Activated CD8-positive, alpha-beta T cell treated with anti-CD3 and anti-CD28 coated beads for 36 hours (primary cell): ENCODE measurements at regions of chr14 and their contacts with region 1.

Region 1: DNA sequence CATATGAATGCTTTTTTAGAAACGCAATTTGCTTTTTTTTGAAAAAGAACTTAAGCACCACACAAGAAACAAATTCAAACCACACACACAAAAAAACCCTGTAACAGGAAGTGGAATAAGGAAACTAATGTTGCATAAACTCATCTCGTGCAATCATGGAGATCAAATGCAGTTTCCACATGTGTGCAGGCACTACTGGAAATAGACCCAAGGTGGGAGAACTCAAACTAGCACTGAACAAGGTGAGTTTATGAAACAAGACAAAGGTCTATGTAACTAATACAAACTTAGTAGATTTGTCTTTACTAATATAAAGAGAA is 17.5 kb downstream of the NIN start:
- DNase-seq: no peak
- ATAC-seq: peak; percentile 70
- H3K4me3 Mint-ChIP-seq: peak overlapping the region; percentile 78
- H3K27ac Mint-ChIP-seq: peak overlapping the region; percentile 99
- H3K4me1 Mint-ChIP-seq: peaks cover 61% of the 10 kb centered on the region
- H3K27me3 Mint-ChIP-seq: no peaks in the 10 kb centered on the region
- CTCF ChIP-seq: no peak

Region 2: DNA sequence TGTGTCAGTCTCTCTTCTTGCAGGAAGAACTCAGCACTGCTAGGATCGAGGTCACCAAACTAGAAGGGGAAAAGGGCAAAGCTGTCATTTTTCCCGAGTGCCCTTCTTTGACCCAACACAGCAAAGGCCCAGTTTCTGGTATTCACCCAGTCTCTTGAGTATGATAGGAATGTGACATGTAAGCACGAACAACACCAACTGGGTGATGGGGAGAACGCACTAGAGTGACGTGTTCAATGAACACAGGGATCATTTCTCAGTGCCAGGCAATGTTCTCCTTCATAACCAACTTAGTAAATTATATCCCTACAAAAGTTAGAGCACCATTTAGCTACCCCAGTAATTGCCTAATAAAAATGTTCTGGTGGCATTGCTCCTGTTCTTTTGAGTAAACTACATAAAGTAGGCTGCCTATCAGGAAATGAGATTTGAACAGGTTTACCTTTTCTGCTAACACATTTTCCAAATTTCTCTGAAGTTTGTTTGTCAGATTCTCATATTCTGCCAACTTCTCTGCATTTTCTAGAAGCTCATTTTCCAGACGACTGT is 47.1 kb before region 1 on chr14:
- CTCF ChIA-PET with region 1: no interaction called
- POLR2A ChIA-PET with region 1: no interaction called
- intact Hi-C with region 1: no loop called
- DNase-seq: no peak
- ATAC-seq: no peak
- H3K4me3 Mint-ChIP-seq: no peak overlapping the region
- H3K27ac Mint-ChIP-seq: peak overlapping the region; percentile 77
- H3K4me1 Mint-ChIP-seq: peaks cover 49% of the 10 kb centered on the region
- H3K27me3 Mint-ChIP-seq: no peaks in the 10 kb centered on the region
- CTCF ChIP-seq: no peak

Region 3: GRCh38 chr14:50797250-50798047 is 16.1 kb before region 1 on chr14:
- CTCF ChIA-PET with region 1: interaction called, 4 read pairs
- POLR2A ChIA-PET with region 1: interaction called, 9 read pairs
- intact Hi-C with region 1: loop called (anchors 2 kb)
- DNase-seq: no peak
- ATAC-seq: no peak
- H3K4me3 Mint-ChIP-seq: no peak overlapping the region
- H3K27ac Mint-ChIP-seq: no peak overlapping the region
- H3K4me1 Mint-ChIP-seq: peaks cover 60% of the 10 kb centered on the region
- H3K27me3 Mint-ChIP-seq: no peaks in the 10 kb centered on the region
- CTCF ChIP-seq: no peak